ENCODE measurements at regions of chrX and their contacts with region 1.

Region 1: GRCh38 chrX:131830400-131831184 is 192.5 kb upstream of the STK26 start:
- DNase-seq: peak; percentile 88
- H3K4me3 Mint-ChIP-seq: peak overlapping the region; percentile 94
- H3K27ac Mint-ChIP-seq: peak overlapping the region; percentile 94
- H3K4me1 Mint-ChIP-seq: peaks cover 27% of the 10 kb centered on the region
- H3K27me3 Mint-ChIP-seq: no peaks in the 10 kb centered on the region

Region 2: DNA sequence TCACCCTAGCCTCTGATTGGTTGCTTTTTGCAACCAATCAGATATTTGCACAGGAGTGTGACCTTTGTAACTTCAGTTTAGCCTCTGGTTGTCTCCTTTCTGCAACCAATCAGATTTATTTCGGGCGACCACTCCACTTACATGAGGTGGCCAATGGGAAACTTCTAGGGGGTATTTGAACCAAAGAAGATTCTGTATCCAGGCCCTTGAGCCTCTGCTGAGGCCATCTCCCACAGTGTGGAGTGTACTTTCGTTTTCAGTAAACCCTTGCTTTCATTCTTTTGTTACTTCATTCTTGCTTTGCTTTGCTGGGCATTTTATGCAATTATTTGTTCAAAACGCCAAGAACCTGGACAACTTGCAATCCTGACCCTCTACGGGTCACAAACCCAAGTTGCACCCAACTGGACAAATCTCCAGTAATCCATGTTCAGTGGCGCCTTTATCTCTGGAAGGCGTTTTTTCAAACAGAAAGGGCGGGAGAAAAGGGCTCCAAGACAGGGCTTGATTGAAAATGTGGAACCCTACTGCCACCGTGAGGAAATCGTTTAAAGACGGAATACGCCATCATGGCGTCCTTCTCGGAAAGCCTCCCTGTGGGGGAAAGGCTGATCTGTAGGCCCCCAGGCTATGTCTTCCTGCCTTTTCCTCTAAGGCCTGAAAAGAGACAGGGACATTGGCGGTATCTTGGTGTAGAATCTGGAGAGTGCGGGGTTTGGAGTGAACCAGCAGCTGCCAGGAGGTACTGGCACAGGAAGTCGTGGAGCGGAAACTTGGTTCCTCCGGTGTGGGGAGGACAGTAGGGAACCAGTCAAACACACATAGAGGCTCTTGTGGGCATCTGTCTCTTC is 102.1 kb before region 1 on chrX:
- intact Hi-C with region 1: no loop called
- DNase-seq: no peak
- H3K4me3 Mint-ChIP-seq: no peak overlapping the region
- H3K27ac Mint-ChIP-seq: no peak overlapping the region
- H3K4me1 Mint-ChIP-seq: no peaks in the 10 kb centered on the region
- H3K27me3 Mint-ChIP-seq: no peaks in the 10 kb centered on the region

Region 3: DNA sequence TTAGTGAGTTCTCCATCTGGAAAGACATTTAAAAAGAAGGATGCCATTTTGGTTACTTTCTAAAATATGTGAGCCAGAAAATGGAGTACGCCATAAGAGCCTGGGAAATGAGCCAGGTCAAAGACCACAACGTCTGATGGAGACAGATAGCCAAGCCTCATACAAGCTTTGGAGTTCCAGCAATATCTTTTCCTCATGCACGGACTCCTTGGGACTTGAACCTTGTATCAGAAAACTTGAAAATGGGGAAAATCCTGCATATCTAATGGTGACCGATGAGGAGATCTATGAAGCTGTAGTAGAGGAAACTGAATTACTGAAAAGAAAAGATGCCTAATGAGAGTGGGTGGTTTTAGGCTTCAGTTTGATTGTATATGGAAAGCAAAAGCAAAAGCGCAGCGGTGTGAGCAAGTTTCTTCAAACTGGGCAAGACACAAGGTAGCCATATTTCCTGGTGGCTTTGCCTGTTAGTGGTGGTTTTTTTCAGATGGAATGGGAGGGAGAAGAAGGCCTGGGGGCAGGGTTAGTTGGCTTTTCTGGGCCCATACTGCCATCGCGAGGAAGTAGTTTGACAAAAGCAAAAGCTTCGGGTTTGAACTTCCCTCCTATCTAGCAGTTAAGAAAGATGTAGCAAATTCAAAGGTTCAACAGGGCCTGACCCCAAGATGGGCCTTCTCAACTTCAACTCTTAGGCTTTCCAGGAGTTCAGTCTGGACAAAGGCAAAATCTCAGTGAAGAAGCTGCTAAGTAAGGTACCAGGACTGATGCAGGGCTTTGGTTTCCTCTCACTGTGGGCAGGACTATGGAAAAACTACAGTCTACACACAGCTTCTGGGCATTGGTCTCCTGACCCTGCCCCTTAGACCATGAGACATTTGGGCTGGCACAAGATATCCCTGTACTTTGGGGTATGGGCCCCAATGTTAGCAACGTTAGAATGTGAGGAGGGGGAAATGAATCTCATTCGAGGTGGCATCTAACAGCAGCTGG is 17.5 kb before region 1 on chrX:
- intact Hi-C with region 1: loop called (anchors 2 kb)
- DNase-seq: peak; percentile 93
- H3K4me3 Mint-ChIP-seq: peak overlapping the region; percentile 77
- H3K27ac Mint-ChIP-seq: peak overlapping the region; percentile 84
- H3K4me1 Mint-ChIP-seq: peaks cover 25% of the 10 kb centered on the region
- H3K27me3 Mint-ChIP-seq: no peaks in the 10 kb centered on the region

Region 4: DNA sequence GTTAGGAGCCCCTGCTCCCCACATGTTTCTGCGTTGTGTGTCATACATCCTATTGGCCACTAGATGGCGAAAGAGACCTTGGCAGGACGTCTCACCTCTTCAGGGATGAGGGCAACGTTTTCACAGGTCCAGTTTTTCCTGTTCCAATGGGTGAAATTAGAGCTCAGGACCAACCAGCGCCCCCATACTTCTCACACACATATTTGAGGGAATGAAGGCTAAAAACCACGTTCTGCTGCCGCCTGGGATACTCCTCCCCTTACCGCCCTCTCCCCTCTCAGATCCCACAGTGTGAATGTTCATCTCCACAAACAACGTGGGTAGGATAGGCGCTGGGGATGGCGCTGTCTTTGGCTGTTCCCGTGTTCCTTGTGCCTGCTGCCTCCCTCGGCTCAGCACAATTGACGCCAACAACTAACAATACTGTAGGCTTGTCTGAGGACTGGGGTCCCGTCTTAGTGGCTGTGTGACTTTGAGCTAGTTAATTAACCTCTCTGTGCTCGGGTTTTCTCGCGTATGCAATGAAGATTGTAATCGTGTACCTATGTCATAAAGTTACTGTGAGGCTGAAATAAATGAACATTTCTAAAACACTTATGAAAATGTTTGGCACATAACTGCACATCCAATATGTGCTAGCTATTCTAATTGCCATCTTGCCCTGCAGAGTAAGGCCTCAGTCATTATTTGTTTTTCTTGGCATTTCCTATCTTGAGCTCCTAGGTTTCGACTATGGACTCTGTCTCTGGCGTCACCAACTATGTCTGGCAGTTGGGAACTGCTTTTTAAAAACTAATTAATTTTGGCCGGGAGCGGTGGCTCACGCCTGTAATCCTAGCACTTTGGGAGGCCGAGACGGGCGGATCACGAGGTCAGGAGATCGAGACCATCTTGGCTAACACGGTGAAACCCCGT is 11.2 kb after region 1 on chrX:
- intact Hi-C with region 1: loop called (anchors 1 kb)
- DNase-seq: peak; percentile 79
- H3K4me3 Mint-ChIP-seq: no peak overlapping the region
- H3K27ac Mint-ChIP-seq: no peak overlapping the region
- H3K4me1 Mint-ChIP-seq: peaks cover 3% of the 10 kb centered on the region
- H3K27me3 Mint-ChIP-seq: no peaks in the 10 kb centered on the region

Region 5: GRCh38 chrX:131944936-131945902 is 114.6 kb after region 1 on chrX:
- intact Hi-C with region 1: no loop called
- DNase-seq: no peak
- H3K4me3 Mint-ChIP-seq: no peak overlapping the region
- H3K27ac Mint-ChIP-seq: peak overlapping the region; percentile 76
- H3K4me1 Mint-ChIP-seq: peaks cover 10% of the 10 kb centered on the region
- H3K27me3 Mint-ChIP-seq: no peaks in the 10 kb centered on the region

Region 6: GRCh38 chrX:132071260-132071659 is 240.7 kb after region 1 on chrX:
- intact Hi-C with region 1: loop called (anchors 10 kb)
- DNase-seq: no peak
- H3K4me3 Mint-ChIP-seq: no peak overlapping the region
- H3K27ac Mint-ChIP-seq: no peak overlapping the region
- H3K4me1 Mint-ChIP-seq: no peaks in the 10 kb centered on the region
- H3K27me3 Mint-ChIP-seq: no peaks in the 10 kb centered on the region

Region 7: DNA sequence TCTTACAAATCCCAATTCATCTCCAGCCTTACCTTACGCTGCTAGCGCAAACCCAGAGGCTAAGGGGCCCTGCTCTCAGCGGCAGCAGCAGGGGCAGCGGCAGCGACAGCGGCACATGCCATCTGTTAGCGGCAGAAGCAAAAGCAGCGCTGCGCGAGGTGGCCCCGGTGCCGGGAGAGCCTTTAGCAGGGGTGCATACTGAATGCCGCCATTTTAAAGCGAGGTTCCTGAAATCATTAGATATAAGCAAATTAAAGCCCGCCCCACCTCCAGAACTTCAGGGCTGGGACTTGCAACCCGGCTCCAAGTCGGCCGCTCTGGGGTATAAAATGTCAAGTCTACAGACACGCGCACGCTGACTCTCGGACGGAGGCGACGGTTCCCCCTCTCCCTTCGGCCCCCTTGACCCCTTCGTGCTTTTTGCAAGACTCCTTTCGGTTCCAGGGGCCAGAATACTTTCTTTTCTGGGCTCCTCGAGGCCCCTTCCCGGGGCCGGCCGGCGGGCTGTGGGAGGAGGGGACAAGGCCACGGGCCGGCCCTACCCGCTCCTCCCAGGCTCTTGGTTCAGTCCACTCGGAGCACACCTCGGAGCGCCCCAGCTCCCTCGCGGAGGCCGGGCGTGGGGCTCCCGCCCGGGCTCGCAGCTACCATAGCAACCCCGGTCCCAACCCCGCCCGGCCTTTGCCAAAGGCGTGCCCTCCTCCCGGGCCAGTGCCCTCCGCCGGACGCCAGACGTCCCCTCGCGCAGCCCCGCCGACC is 658.4 kb after region 1 on chrX and contains the start of gene MBNL3:
- intact Hi-C with region 1: loop called (anchors 5 kb)
- DNase-seq: peak; percentile 87
- H3K4me3 Mint-ChIP-seq: peak within 1 kb of the TSS; percentile 93
- H3K27ac Mint-ChIP-seq: peak within 1 kb of the TSS; percentile 97
- H3K4me1 Mint-ChIP-seq: peaks cover 24% of the 10 kb centered on the region
- H3K27me3 Mint-ChIP-seq: peaks cover 10% of the 10 kb centered on the region
- total RNA-seq, gene MBNL3: 12.2 and 15.4 TPM in 2 replicates

Region 8: GRCh38 chrX:132622130-132622529 is 791.5 kb after region 1 on chrX:
- intact Hi-C with region 1: loop called (anchors 5 kb)
- DNase-seq: peak; percentile 62
- H3K4me3 Mint-ChIP-seq: no peak overlapping the region
- H3K27ac Mint-ChIP-seq: peak overlapping the region; percentile 66
- H3K4me1 Mint-ChIP-seq: peaks cover 5% of the 10 kb centered on the region
- H3K27me3 Mint-ChIP-seq: no peaks in the 10 kb centered on the region

Region 9: DNA sequence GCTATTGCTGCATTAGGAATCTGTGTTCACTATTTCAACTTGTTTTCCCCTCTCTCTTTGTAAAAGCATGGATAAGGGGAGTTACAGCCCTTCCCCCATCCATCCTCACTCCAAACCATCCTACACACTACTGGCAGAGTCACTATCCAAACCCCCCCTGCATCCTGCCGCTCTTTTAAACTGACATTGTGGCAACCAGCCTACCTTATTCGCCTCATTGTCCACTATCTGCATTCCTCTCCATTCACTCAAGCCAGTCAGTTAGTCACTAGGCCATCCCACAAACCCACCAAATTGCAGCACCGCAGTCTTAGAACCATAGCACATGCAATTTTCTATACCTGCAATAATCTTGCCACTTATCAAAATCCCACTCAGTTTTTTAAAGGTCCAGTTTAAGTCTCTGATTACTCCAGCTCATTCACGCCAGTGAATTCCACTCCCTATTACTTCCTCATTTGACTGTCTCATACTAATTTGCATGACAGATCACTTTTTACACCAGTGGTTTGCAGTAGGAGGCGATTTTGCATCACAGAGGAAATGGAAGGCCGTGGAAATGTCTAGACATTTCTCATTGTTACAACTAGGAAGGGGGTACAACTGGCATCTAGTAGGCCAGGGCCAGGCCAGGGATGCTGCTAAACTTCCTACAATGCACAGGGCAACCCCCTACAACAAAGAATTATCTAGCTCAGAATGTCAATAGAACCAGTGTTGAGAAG is 946.1 kb after region 1 on chrX:
- intact Hi-C with region 1: loop called (anchors 10 kb)
- DNase-seq: no peak
- H3K4me3 Mint-ChIP-seq: no peak overlapping the region
- H3K27ac Mint-ChIP-seq: peak overlapping the region; percentile 52
- H3K4me1 Mint-ChIP-seq: peaks cover 12% of the 10 kb centered on the region
- H3K27me3 Mint-ChIP-seq: no peaks in the 10 kb centered on the region